ENCODE measurements at regions of chr19 and their contacts with region 1.

Region 1: DNA sequence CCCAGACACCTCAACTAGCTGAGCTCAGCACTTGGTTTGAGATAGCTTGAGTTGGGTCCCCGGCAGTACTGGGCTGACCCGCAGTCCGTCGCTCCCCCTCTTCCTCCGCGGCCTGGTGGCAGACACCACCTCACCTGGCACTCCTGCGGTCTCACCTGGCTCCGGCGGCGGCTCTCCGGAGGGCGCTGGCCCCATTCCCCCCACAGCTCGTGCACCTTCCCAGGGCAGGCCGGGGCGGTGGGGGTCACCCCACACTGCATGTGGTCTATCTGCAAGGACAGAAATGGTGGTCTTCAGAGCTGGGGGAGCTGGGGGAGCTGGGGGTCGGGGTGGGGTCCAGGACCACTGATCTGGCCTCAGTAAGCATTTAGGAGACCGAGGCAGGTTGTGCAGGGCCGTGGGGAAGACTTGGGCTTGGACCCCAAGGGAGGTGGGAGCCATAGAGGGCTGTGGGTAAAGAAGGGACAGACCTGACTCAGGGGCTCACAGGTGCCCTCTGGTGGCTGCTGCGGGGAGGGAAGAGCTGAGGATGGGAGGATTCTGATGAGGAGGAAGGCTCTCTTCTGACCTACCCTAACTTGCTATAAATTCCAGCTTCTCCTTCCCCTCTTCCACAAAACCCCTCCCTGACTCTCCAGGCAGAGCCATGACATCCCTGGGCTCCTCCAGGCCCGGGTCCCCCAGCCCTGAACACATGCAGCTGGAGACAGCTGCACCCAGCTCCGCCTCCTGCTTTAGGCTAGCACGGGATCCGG is 6.7 kb upstream of the PLIN4 start:
- DNase-seq: no peak
- H3K4me3 ChIP-seq: no peak overlapping the region
- H3K27ac ChIP-seq: no peak overlapping the region
- H3K27me3 ChIP-seq: peaks cover 8% of the 10 kb centered on the region
- CTCF ChIP-seq: peak; percentile 77

Region 2: DNA sequence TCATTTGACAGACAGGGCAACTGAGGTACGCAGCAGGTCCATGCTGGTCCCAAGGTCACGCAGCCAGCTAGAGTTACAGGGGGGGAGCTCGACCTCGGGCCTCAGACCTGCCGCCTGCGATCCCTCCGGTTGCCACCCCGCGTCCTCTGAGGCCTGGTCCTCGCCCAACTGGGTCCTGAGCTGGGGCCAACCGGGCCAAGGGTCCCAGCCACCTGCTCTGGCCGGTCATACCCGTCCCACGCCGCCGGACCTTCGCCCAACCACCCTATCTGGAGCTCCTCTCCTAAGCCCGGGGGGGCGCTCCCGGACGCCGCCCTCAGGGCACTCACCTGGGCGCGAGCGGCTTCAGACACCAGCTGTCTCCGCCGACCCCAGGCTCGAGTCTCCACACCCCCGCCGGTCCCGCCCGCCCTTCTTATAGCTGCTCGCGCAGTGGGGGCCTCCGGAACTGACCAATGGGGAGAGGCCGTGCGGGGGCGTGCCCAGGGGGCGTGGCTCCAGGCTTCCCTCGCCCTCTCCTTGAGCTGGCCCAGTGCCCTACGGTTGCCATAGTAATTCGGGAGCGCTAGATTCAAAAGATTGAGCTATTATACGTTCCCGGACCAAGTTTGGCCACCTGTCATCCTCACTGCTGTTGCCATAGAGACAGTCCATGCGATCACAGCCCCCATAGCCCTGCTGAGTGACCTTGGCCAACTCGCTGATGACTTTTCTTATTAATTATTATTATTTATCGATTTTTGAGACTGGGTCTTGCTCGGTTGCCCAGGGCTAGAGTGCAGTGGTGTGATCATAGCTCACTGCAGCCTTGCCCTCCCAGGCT is 10.1 kb after region 1 on chr19 and contains the start of gene PLIN5:
- CTCF ChIA-PET with region 1: interaction called, 13 read pairs
- POLR2A ChIA-PET with region 1: no interaction called
- DNase-seq: no peak
- H3K4me3 ChIP-seq: peak within 1 kb of the TSS; percentile 2; the same call in 1 of the 2 replicates
- H3K27ac ChIP-seq: no peak within 1 kb of the TSS
- H3K27me3 ChIP-seq: peaks cover 28% of the 10 kb centered on the region
- CTCF ChIP-seq: no peak
- polyA plus RNA-seq, gene PLIN5: not detected in 2 replicates

Region 3: GRCh38 chr19:4606921-4607678 is 82.1 kb after region 1 on chr19:
- CTCF ChIA-PET with region 1: no interaction called
- POLR2A ChIA-PET with region 1: no interaction called
- DNase-seq: no peak
- H3K4me3 ChIP-seq: no peak overlapping the region
- H3K27ac ChIP-seq: no peak overlapping the region
- H3K27me3 ChIP-seq: peaks cover 27% of the 10 kb centered on the region
- CTCF ChIP-seq: no peak

Measured in AG04450 (cell line).